Stomach (tissue), 19 donors: ENCODE measurements at regions of chr18 and their contacts with region 1.

Region 1: DNA sequence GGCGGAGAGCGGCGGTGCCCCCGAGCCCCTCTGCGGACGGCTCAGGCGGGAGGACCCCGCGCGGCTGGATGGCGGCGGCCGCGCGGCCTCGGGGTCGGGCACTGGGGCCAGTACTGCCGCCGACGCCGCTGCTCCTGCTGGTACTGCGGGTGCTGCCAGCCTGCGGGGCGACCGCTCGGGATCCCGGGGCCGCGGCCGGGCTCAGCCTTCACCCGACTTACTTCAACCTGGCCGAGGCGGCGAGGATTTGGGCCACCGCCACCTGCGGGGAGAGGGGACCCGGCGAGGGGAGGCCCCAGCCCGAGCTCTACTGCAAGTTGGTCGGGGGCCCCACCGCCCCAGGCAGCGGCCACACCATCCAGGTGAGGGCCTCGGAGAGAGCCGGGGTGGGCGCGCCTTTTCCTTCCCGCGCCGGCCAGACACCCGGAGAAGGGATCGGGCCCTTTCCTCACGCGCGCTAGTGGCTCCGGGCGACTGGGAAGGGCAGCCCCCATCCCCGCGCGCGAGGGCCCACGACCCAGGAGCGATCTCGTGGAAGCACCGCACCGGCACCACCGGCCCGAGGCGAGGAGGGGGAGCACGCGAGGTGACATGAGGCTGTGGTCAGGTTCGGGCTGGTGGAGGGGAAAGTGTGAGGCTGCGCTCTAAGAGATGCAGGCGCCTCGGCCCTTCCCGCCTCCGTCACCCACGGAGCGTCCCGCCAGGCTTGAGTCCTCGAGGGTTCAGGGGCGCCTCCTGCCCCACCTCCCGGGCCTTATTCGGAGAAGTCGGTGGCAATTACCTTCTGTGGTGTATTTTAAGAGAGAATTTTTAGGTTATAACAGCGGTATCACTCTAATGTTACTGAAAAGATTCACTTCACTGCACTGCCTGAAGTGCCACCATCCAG is 607 bp downstream of the LAMA3 start:
- DNase-seq: peak; percentile 29 to 60
- H3K4me3 ChIP-seq: peak overlapping the region; percentile 68 to 79 (median 73)
- H3K27ac ChIP-seq: peak overlapping the region; percentile 59 to 87 (median 68)
- H3K4me1 ChIP-seq: peaks cover 16 to 44% (median 28%) of the 10 kb centered on the region in 4 donors
- H3K27me3 ChIP-seq: peaks cover 0 to 31% (median 11%) of the 10 kb centered on the region in 3 donors
- CTCF ChIP-seq: no peak
- EP300 ChIP-seq: no peak
- POLR2A ChIP-seq: no peak

Region 2: GRCh38 chr18:23629444-23629946 is 60.4 kb before region 1 on chr18:
- intact Hi-C with region 1: loop called (anchors 10 kb)
- DNase-seq: peak; percentile 62 to 64
- H3K4me3 ChIP-seq: no peak overlapping the region
- H3K27ac ChIP-seq: peak overlapping the region in 4 of 5 donors; percentile 41 to 63 (median 49)
- H3K4me1 ChIP-seq: peaks cover 5 to 46% (median 18%) of the 10 kb centered on the region in 4 donors
- H3K27me3 ChIP-seq: no peaks in the 10 kb centered on the region
- CTCF ChIP-seq: no peak
- EP300 ChIP-seq: no peak
- POLR2A ChIP-seq: no peak